Activated CD8-positive, alpha-beta memory T cell treated with anti-CD3 and anti-CD28 coated beads, Interleukin-2, amount 10 ng/mL, durations not matched to agents 7 days and 5 days (primary cell): ENCODE measurements at regions of chr7 and their contacts with region 1.

Region 1: GRCh38 chr7:155009570-155010157 is 6.7 kb upstream of the PAXIP1 start:
- DNase-seq: peak; percentile 45
- ATAC-seq: peak; percentile 52
- H3K4me3 Mint-ChIP-seq: no peak overlapping the region
- H3K27ac Mint-ChIP-seq: no peak overlapping the region
- H3K4me1 Mint-ChIP-seq: peaks cover 5% of the 10 kb centered on the region
- H3K27me3 Mint-ChIP-seq: peaks cover 10% of the 10 kb centered on the region

Region 2: DNA sequence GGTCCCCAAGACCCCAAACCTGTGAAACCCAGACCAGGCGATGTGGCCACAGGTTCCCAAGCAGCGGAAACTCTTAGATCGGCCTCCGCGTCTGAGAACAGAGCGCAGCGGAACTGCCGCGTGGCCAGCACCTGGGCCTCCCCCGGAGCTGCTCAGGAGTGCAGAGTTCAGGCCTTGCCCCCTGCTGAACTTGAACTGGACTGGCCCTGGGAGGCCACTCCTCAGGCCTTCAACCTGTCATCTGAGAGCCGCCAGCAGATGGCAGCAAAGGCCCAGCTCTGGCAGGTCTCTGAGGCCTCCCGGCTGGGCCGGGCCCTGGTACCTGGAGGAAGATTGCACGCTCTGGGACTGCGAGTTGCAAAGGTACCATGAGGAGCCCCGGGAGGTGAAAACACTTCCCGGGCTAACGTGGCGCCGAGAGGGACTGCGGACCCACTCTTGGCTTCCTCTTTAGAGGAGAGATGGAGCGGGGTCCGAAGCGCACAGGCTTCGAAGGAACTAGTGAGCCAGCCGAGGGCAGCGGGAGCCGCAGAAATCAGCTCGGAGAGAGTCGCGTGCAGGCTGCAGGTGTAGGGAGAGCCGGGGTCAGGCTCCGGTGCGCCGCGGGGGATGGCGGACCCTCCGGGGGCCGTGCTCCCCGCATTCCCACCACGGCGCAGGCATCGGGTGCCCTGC is 95.9 kb before region 1 on chr7:
- CTCF ChIA-PET with region 1: interaction called, 11 read pairs
- DNase-seq: peak; percentile 89
- ATAC-seq: peak; percentile 99
- H3K4me3 Mint-ChIP-seq: peak overlapping the region; percentile 36
- H3K27ac Mint-ChIP-seq: no peak overlapping the region
- H3K4me1 Mint-ChIP-seq: peaks cover 4% of the 10 kb centered on the region
- H3K27me3 Mint-ChIP-seq: peaks cover 15% of the 10 kb centered on the region